Gastrocnemius medialis (tissue), 4 donors: ENCODE measurements at regions of chr4 and their contacts with region 1.

Region 1: GRCh38 chr4:111854494-111855087 is 290.7 kb upstream of the FAM241A start:
- DNase-seq: no peak
- ATAC-seq: no peak
- H3K4me3 ChIP-seq: no peak overlapping the region
- H3K27ac ChIP-seq: no peak overlapping the region
- H3K4me1 ChIP-seq: no peaks in the 10 kb centered on the region
- H3K27me3 ChIP-seq: no peaks in the 10 kb centered on the region
- CTCF ChIP-seq: peak in 3 of 5 experiments; percentile 15 to 53 (median 28)
- POLR2A ChIP-seq: no peak

Region 2: DNA sequence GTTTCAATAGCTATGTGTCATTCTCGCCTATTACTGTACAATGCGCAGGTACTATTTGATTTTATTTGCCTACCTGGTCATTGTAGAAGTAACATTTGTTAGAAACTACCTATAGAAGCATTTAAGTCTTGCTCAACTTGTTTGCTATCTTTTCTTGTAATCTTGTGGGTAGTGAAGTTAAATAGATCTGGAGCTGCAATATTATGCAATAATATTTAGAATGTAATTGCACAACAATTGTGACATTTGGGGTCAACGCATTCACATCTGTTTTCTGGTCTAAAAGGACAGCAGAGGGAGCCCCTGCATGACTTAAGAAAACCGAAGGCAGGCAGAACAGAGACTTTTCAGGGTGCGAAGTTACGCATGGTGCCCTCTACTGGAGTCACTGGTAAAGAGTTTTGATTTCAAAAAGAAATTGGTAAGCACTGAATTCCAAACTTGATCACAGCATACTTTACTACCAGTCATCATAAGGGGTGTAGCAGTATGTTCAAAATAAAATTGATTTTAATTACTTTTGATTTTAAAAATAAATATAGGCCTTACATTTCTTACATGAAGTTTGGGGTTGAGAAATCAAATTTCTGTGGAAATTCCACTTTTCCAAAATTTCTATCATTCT is 212.5 kb before region 1 on chr4:
- in situ Hi-C with region 1: loop called in 1 of 4 experiments (anchors 25 kb)
- intact Hi-C with region 1: no loop called
- DNase-seq: peak in 1 of 2 donors; percentile 22
- ATAC-seq: peak in 1 of 2 donors; percentile 63
- H3K4me3 ChIP-seq: no peak overlapping the region
- H3K27ac ChIP-seq: no peak overlapping the region
- H3K4me1 ChIP-seq: no peaks in the 10 kb centered on the region
- H3K27me3 ChIP-seq: no peaks in the 10 kb centered on the region
- CTCF ChIP-seq: peak in 4 of 5 experiments; percentile 21 to 52 (median 39)
- POLR2A ChIP-seq: no peak